ENCODE measurements at regions of chr13 and their contacts with region 1.

Region 1: GRCh38 chr13:38255296-38255995 is 94.2 kb upstream of the UFM1 start:
- DNase-seq: no peak
- ATAC-seq: no peak
- H3K4me3 ChIP-seq: no peak overlapping the region
- H3K27ac ChIP-seq: no peak overlapping the region
- H3K4me1 ChIP-seq: no peaks in the 10 kb centered on the region
- H3K27me3 ChIP-seq: no peaks in the 10 kb centered on the region
- CTCF ChIP-seq: no peak
- POLR2A ChIP-seq: no peak

Region 2: GRCh38 chr13:37806666-37807065 is 448.8 kb before region 1 on chr13:
- intact Hi-C with region 1: loop called in 1 of 10 experiments (anchors 5 kb)
- DNase-seq: no peak
- ATAC-seq: no peak
- H3K4me3 ChIP-seq: no peak overlapping the region
- H3K27ac ChIP-seq: no peak overlapping the region
- H3K4me1 ChIP-seq: no peaks in the 10 kb centered on the region
- H3K27me3 ChIP-seq: no peaks in the 10 kb centered on the region
- CTCF ChIP-seq: no peak
- POLR2A ChIP-seq: no peak

Region 3: GRCh38 chr13:38321654-38322053 is 66.2 kb after region 1 on chr13:
- intact Hi-C with region 1: no loop called
- DNase-seq: no peak
- ATAC-seq: no peak
- H3K4me3 ChIP-seq: no peak overlapping the region
- H3K27ac ChIP-seq: no peak overlapping the region
- H3K4me1 ChIP-seq: no peaks in the 10 kb centered on the region
- H3K27me3 ChIP-seq: no peaks in the 10 kb centered on the region
- CTCF ChIP-seq: no peak
- POLR2A ChIP-seq: no peak

Region 4: DNA sequence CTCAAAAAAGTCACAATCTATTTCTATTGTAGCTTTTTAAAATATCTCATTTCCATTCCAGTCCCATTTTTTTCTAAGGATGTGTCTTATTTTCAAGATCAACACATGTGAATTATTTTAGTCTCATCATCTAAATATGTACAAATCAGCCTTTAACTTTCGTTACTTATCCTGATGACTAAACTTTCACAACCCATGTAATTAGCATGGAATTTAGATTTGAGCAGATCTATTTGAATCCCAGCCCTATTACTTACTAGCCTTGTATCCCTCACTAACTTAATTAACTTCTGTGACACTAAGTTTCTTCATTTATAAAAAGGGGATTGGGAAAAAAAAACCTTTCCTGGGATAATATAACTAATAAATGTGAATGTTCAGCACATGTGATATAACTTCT is 175.3 kb after region 1 on chr13:
- intact Hi-C with region 1: no loop called
- DNase-seq: no peak
- ATAC-seq: no peak
- H3K4me3 ChIP-seq: no peak overlapping the region
- H3K27ac ChIP-seq: no peak overlapping the region
- H3K4me1 ChIP-seq: no peaks in the 10 kb centered on the region
- H3K27me3 ChIP-seq: no peaks in the 10 kb centered on the region
- CTCF ChIP-seq: no peak
- POLR2A ChIP-seq: no peak